ENCODE measurements at regions of chr6 and their contacts with region 1.

Region 1: DNA sequence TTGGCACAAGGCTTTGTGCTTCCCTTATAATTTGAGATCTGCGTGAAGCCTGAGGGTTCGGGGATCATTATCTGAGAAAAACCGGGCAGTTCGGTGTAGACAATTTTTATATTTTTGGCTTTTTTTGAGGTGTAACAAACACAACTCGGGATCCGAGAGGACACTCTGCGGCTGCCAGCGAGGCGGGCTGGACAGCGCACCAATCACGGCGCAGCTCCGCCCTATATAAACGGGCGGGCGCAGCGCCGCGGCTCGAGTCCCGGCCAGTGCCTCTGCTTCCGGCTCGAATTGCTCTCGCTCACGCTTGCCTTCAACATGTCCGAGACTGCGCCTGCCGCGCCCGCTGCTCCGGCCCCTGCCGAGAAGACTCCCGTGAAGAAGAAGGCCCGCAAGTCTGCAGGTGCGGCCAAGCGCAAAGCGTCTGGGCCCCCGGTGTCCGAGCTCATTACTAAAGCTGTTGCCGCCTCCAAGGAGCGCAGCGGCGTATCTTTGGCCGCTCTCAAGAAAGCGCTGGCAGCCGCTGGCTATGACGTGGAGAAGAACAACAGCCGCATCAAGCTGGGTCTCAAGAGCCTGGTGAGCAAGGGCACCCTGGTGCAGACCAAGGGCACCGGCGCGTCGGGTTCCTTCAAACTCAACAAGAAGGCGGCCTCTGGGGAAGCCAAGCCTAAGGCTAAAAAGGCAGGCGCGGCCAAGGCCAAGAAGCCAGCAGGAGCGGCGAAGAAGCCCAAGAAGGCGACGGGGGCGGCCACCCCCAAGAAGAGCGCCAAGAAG is 69.0 kb downstream of the HFE start:
- DNase-seq: peak; percentile 91
- H3K4me3 ChIP-seq: peak overlapping the region; percentile 89
- H3K27ac ChIP-seq: peak overlapping the region; percentile 99
- H3K4me1 ChIP-seq: peaks cover 12% of the 10 kb centered on the region
- H3K27me3 ChIP-seq: no peaks in the 10 kb centered on the region
- CTCF ChIP-seq: no peak

Region 2: DNA sequence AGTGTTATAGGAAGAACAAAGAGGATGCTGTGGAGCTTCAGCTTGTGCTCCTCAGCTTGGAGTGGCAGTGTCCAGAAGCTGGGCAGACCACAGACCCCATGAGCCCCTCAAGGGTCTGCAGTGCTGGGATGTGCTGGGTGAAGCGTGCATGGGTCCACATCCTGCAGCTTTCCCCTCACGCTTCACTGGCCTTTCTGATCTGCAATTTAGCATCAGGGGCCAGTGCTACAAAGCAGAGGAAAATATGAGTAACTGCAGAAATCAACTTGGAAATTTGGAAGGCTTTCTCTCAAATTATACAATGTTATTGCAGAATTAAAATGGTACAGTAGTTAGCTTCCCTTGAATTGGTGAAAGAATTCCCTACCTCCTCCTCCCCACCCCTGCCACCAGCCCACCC is 391.7 kb before region 1 on chr6:
- CTCF ChIA-PET with region 1: no interaction called
- POLR2A ChIA-PET with region 1: interaction called, 23 read pairs
- intact Hi-C with region 1: no loop called
- DNase-seq: no peak
- H3K4me3 ChIP-seq: no peak overlapping the region
- H3K27ac ChIP-seq: no peak overlapping the region
- H3K4me1 ChIP-seq: no peaks in the 10 kb centered on the region
- H3K27me3 ChIP-seq: no peaks in the 10 kb centered on the region
- CTCF ChIP-seq: no peak

Region 3: DNA sequence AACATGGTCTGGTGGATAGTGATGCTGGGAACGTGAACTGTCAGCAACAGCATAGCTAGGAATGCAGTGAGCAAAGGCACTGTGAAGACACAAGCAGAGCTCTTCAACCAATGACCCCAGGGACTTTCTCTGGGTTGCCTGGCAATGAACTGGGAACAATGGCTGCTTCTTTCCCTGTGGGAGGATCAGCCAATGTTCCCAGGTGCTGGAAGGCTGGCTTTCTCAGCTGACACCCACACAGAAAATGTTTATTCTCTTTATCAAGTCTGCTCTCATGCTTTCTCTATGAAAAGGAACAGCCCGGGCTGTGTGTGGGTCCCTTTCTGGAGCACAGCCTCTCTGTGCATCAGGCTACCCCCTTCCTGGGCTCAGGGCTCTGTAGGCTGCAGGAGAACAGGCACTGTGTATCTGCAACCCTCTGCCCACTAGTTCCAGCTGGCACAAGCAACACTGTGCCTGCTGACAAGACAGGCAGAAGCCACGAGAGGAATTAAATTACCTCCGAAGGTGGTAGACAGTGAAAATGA is 14.8 kb before region 1 on chr6:
- CTCF ChIA-PET with region 1: no interaction called
- POLR2A ChIA-PET with region 1: interaction called, 20 read pairs
- intact Hi-C with region 1: no loop called
- DNase-seq: no peak
- H3K4me3 ChIP-seq: no peak overlapping the region
- H3K27ac ChIP-seq: peak overlapping the region; percentile 96
- H3K4me1 ChIP-seq: peaks cover 41% of the 10 kb centered on the region
- H3K27me3 ChIP-seq: no peaks in the 10 kb centered on the region
- CTCF ChIP-seq: no peak